Left ventricle myocardium superior (tissue), 1 donor: ENCODE measurements at regions of chr13 and their contacts with region 1.

Region 1: GRCh38 chr13:67090856-67091255 is 139.3 kb downstream of the PCDH9 start:
- DNase-seq: no peak
- ATAC-seq: no peak

Region 2: GRCh38 chr13:67134417-67135129 is 43.7 kb after region 1 on chr13:
- intact Hi-C with region 1: loop called (anchors 5 kb)
- DNase-seq: no peak
- ATAC-seq: peak; percentile 63